PC-9 (cell line): ENCODE measurements at regions of chr5 and their contacts with region 1.

Region 1: GRCh38 chr5:124570285-124571035 is 176.0 kb downstream of the ZNF608 start:
- DNase-seq: no peak
- H3K4me3 ChIP-seq: no peak overlapping the region
- H3K27ac ChIP-seq: no peak overlapping the region
- H3K4me1 ChIP-seq: no peaks in the 10 kb centered on the region
- H3K27me3 ChIP-seq: no peaks in the 10 kb centered on the region
- CTCF ChIP-seq: no peak

Region 2: GRCh38 chr5:124419531-124419930 is 150.9 kb before region 1 on chr5:
- CTCF ChIA-PET with region 1: no interaction called
- POLR2A ChIA-PET with region 1: no interaction called
- intact Hi-C with region 1: no loop called
- DNase-seq: no peak
- H3K4me3 ChIP-seq: no peak overlapping the region
- H3K27ac ChIP-seq: no peak overlapping the region
- H3K4me1 ChIP-seq: peaks cover 7% of the 10 kb centered on the region; the same call in 1 of the 2 replicates
- H3K27me3 ChIP-seq: no peaks in the 10 kb centered on the region
- CTCF ChIP-seq: no peak

Region 3: GRCh38 chr5:124519396-124519795 is 51.1 kb before region 1 on chr5:
- CTCF ChIA-PET with region 1: no interaction called
- POLR2A ChIA-PET with region 1: no interaction called
- intact Hi-C with region 1: no loop called
- DNase-seq: no peak
- H3K4me3 ChIP-seq: no peak overlapping the region
- H3K27ac ChIP-seq: no peak overlapping the region
- H3K4me1 ChIP-seq: no peaks in the 10 kb centered on the region
- H3K27me3 ChIP-seq: no peaks in the 10 kb centered on the region
- CTCF ChIP-seq: no peak

Region 4: DNA sequence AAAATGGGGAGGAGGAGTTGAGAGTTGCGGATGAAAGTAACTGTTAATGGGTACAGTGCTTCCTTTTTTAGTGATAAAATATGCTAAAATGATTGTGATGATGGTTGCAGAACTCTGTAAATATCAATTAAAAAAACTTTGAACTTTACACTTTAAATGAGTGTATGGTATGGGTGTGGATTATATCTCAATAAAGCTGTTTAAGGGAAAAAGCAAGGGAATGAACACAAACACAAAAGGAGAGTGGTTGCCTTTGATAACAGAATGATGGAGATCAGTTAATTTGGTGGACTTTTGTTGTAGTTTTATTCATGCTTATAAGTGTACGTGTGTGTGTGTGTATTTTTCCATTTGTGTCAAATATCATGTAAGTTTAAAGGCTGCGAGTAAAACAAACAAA is 10.1 kb before region 1 on chr5:
- CTCF ChIA-PET with region 1: no interaction called
- POLR2A ChIA-PET with region 1: interaction called, 30 read pairs
- intact Hi-C with region 1: no loop called
- DNase-seq: no peak
- H3K4me3 ChIP-seq: no peak overlapping the region
- H3K27ac ChIP-seq: no peak overlapping the region
- H3K4me1 ChIP-seq: no peaks in the 10 kb centered on the region
- H3K27me3 ChIP-seq: no peaks in the 10 kb centered on the region
- CTCF ChIP-seq: no peak